ACHN (cell line): ENCODE measurements at regions of chr10 and their contacts with region 1.

Region 1: DNA sequence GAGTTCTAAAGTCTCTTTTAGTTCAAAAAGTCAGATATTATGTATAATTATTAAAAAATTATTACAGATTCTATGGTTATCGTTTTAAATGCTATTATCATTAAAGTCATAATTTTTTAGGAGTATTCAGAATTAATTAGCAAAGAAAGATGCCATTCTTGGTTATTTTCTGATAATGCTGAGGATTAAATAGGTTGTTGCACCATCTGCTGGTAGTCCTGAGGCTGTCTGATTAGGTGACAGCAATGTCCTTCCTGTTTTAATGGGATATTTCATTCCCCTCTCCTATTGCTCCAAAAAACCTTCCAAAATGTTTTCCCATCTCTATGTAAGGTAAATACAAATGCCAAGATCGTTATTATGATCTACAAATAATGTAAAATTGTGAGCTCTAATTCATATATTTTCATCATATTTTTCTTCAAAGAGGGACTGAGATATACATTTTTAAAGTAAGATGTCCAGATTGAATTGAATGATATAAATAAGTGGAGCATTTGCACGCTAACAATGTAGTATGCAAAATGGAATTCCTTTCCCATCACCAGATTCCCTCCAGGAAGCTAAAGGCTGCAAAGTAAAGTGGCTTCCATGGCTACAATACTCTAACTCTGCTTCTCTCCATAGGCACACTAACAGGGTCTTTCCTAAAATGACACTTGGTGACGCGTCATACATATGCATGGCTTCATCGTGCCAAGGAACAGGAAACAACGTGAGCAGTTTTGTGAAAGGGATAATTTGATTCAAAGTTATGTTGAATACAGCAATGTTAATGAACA is 58.8 kb upstream of the AKR1E2 start:
- DNase-seq: peak; percentile 51

Region 2: GRCh38 chr10:4512671-4513240 is 254.5 kb before region 1 on chr10:
- in situ Hi-C with region 1: loop called (anchors 25 kb)
- DNase-seq: peak; percentile 62

Region 3: DNA sequence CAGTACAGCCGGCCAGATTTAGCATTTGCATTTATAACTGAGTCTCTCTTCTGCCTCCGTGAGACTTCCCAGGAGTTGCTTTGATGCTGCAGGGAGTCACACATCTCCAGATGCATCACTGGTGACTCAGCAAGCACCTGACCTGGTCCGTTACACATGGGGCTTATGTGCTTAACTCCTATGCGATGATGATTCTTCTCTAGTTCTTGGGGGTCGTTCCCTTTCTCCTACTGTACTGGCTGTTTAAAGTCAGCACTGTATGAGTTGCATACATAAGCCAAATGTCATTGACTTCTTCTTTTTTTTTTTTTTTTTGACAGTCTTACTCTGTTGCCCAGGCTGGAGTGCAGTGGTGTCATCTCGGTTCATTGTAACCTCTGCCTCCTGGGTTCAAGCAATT is 45.8 kb after region 1 on chr10:
- in situ Hi-C with region 1: no loop called
- DNase-seq: peak; percentile 87

Region 4: DNA sequence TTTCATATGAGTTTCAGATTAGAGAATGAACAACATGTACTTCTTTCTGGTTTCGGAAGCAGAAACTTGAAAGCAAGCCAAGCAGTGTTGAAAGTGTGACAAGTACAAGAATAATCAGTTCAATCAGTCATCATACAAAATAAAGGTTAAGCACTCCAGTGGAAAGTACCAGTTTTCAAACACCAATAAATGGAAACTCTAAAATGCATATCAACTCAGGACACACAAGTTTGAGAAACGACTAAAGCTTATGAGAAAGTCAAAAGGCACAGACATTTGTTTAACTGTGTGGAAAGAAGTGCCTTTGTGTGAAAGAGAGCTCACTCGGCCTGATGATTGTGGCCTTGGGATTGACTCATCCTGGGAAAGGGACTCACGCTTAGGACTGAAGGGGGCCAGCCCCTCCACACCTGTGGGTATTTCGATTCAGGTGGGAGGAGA is 135.4 kb after region 1 on chr10:
- in situ Hi-C with region 1: no loop called
- DNase-seq: no peak